ENCODE measurements at regions of chr2 and their contacts with region 1.

Region 1: GRCh38 chr2:101328474-101329007 is 20.0 kb upstream of the RNF149 start:
- DNase-seq: peak; percentile 86
- H3K4me3 ChIP-seq: peak overlapping the region in 2 of 3 experiments; percentile 10 to 21
- H3K27ac ChIP-seq: peak overlapping the region; percentile 80
- H3K4me1 ChIP-seq: peaks cover 40% of the 10 kb centered on the region
- H3K27me3 ChIP-seq: no peaks in the 10 kb centered on the region
- CTCF ChIP-seq: no peak

Region 2: GRCh38 chr2:101197215-101197745 is 131.3 kb before region 1 on chr2:
- CTCF ChIA-PET with region 1: interaction called, 11 read pairs
- dilution Hi-C with region 1: no loop called
- in situ Hi-C with region 1: no loop called
- intact Hi-C with region 1: no loop called
- DNase-seq: no peak
- H3K4me3 ChIP-seq: no peak overlapping the region
- H3K27ac ChIP-seq: no peak overlapping the region
- H3K4me1 ChIP-seq: peaks cover 23% of the 10 kb centered on the region
- H3K27me3 ChIP-seq: no peaks in the 10 kb centered on the region
- CTCF ChIP-seq: peak in 1 of 2 donors; percentile 29

Region 3: GRCh38 chr2:101308432-101309210 is 19.9 kb before region 1 on chr2 and contains the start of gene RNF149:
- CTCF ChIA-PET with region 1: no interaction called
- dilution Hi-C with region 1: no loop called
- in situ Hi-C with region 1: no loop called
- intact Hi-C with region 1: loop called (anchors 1 kb)
- DNase-seq: peak; percentile 85
- H3K4me3 ChIP-seq: peak within 1 kb of the TSS; percentile 46 to 71 (median 66)
- H3K27ac ChIP-seq: peak within 1 kb of the TSS; percentile 83
- H3K4me1 ChIP-seq: peaks cover 29% of the 10 kb centered on the region
- H3K27me3 ChIP-seq: no peaks in the 10 kb centered on the region
- CTCF ChIP-seq: no peak
- total RNA-seq, gene RNF149: 53.0 to 55.8 TPM

Measured in mammary epithelial cell (primary cell).